WTC11 (cell line): ENCODE measurements at regions of chr17 and their contacts with region 1.

Region 1: DNA sequence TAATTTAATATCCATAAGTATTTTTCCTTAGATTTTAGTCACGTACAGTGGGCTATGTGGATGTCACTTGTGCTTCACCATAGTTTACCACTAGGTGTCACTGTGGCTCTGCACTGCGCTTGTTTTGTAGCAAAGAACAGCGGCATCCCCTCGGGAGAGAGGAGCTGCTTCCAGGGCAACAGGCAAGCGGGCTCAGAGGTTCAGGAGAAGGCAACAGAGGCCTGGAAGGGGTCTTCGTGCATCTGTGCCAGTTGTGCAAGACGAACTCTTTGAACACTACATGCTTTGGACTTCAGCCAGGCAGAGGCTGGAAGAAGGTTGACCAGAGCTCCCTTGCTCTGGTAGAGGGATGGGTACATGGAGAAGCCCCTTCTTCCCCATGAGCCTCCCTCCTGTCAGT is 20.6 kb downstream of the CYB561 start:
- DNase-seq: peak; percentile 83
- ATAC-seq: peak; percentile 62
- H3K4me3 Mint-ChIP-seq: no peak overlapping the region
- H3K27ac Mint-ChIP-seq: no peak overlapping the region
- H3K4me1 Mint-ChIP-seq: peaks cover 35% of the 10 kb centered on the region
- H3K27me3 Mint-ChIP-seq: no peaks in the 10 kb centered on the region
- CTCF ChIP-seq: peak; percentile 66

Region 2: GRCh38 chr17:63445979-63446691 is 20.7 kb after region 1 on chr17 and contains the start of gene CYB561:
- CTCF ChIA-PET with region 1: interaction called, 89 read pairs
- POLR2A ChIA-PET with region 1: interaction called, 3 read pairs
- DNase-seq: peak; percentile 76
- ATAC-seq: peak; percentile 80
- H3K4me3 Mint-ChIP-seq: peak within 1 kb of the TSS; percentile 64
- H3K27ac Mint-ChIP-seq: peak within 1 kb of the TSS; percentile 74; the same call in 1 of the 2 replicates
- H3K4me1 Mint-ChIP-seq: peaks cover 32% of the 10 kb centered on the region
- H3K27me3 Mint-ChIP-seq: peaks cover 5% of the 10 kb centered on the region
- CTCF ChIP-seq: peak; percentile 62
- total RNA-seq, gene CYB561: 27.0 to 35.1 TPM (median 28.7 TPM) in 3 replicates

Region 3: GRCh38 chr17:63497708-63498483 is 72.4 kb after region 1 on chr17:
- CTCF ChIA-PET with region 1: interaction called, 44 read pairs
- POLR2A ChIA-PET with region 1: no interaction called
- DNase-seq: peak; percentile 72
- ATAC-seq: peak; percentile 94
- H3K4me3 Mint-ChIP-seq: no peak overlapping the region
- H3K27ac Mint-ChIP-seq: 0 out of 2 replicates have a peak overlapping the region, but pooled peaks have one; percentile 36
- H3K4me1 Mint-ChIP-seq: peaks cover 8% of the 10 kb centered on the region
- H3K27me3 Mint-ChIP-seq: no peaks in the 10 kb centered on the region; the same call in 1 of the 2 replicates
- CTCF ChIP-seq: no peak

Region 4: GRCh38 chr17:63564562-63564961 is 139.1 kb after region 1 on chr17:
- CTCF ChIA-PET with region 1: interaction called, 15 read pairs
- POLR2A ChIA-PET with region 1: no interaction called
- DNase-seq: no peak
- ATAC-seq: peak; percentile 81
- H3K4me3 Mint-ChIP-seq: no peak overlapping the region
- H3K27ac Mint-ChIP-seq: peak overlapping the region; percentile 63
- H3K4me1 Mint-ChIP-seq: no peaks in the 10 kb centered on the region
- H3K27me3 Mint-ChIP-seq: no peaks in the 10 kb centered on the region
- CTCF ChIP-seq: no peak

Region 5: DNA sequence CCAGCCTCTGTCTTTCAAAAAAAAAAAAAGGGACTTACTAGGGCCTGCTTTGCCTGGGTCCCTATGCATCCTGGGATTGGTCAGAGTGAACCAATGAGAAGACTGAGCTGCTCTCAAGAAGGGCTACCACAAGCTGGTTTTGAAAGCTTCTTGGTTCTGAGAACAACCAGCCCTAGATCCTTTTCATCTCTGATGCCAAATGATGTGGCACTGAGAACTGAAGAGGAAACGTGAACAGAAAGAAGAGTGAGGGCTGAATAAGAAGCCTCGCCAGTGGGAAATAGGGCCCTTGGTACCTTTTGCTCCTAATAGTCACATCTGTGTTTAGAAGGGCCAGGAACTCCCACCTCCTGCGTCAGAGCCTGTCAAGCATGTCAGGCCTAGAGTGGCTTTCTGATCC is 185.9 kb after region 1 on chr17:
- CTCF ChIA-PET with region 1: interaction called, 104 read pairs
- POLR2A ChIA-PET with region 1: no interaction called
- DNase-seq: no peak
- ATAC-seq: peak; percentile 46
- H3K4me3 Mint-ChIP-seq: no peak overlapping the region
- H3K27ac Mint-ChIP-seq: no peak overlapping the region
- H3K4me1 Mint-ChIP-seq: no peaks in the 10 kb centered on the region
- H3K27me3 Mint-ChIP-seq: no peaks in the 10 kb centered on the region
- CTCF ChIP-seq: no peak

Region 6: GRCh38 chr17:63688396-63689020 is 263.0 kb after region 1 on chr17:
- CTCF ChIA-PET with region 1: interaction called, 13 read pairs
- POLR2A ChIA-PET with region 1: no interaction called
- DNase-seq: no peak
- ATAC-seq: no peak
- H3K4me3 Mint-ChIP-seq: no peak overlapping the region
- H3K27ac Mint-ChIP-seq: no peak overlapping the region
- H3K4me1 Mint-ChIP-seq: no peaks in the 10 kb centered on the region
- H3K27me3 Mint-ChIP-seq: no peaks in the 10 kb centered on the region
- CTCF ChIP-seq: no peak